ENCODE measurements at regions of chr4 and their contacts with region 1.

Region 1: GRCh38 chr4:186725469-186726425 is 2.1 kb upstream of the FAT1 start:
- DNase-seq: peak; percentile 72 to 91 (median 80)
- ATAC-seq: peak; percentile 69 to 86 (median 76)
- H3K4me3 ChIP-seq: peak overlapping the region; percentile 54 to 96 (median 86)
- H3K27ac ChIP-seq: peak overlapping the region; percentile 78 to 91 (median 86)
- H3K4me1 ChIP-seq: peaks cover 0 to 8% (median 0%) of the 10 kb centered on the region in 3 donors
- H3K27me3 ChIP-seq: no peaks in the 10 kb centered on the region
- CTCF ChIP-seq: peak; percentile 27 to 57 (median 36)

Region 2: GRCh38 chr4:186936496-186937375 is 211.0 kb after region 1 on chr4:
- intact Hi-C with region 1: loop called in 1 of 3 experiments (anchors 5 kb)
- DNase-seq: no peak
- ATAC-seq: peak; percentile 85 to 94 (median 93)
- H3K4me3 ChIP-seq: peak overlapping the region in 2 of 4 donors; percentile 1 to 6
- H3K27ac ChIP-seq: peak overlapping the region; percentile 61 to 86 (median 74)
- H3K4me1 ChIP-seq: peaks cover 13 to 28% (median 17%) of the 10 kb centered on the region in 3 donors
- H3K27me3 ChIP-seq: no peaks in the 10 kb centered on the region
- CTCF ChIP-seq: peak in 2 of 4 donors; percentile 29 to 32

Measured in pancreas (tissue), 10 donors.